Panc1 (cell line): ENCODE measurements at regions of chr1 and their contacts with region 1.

Region 1: DNA sequence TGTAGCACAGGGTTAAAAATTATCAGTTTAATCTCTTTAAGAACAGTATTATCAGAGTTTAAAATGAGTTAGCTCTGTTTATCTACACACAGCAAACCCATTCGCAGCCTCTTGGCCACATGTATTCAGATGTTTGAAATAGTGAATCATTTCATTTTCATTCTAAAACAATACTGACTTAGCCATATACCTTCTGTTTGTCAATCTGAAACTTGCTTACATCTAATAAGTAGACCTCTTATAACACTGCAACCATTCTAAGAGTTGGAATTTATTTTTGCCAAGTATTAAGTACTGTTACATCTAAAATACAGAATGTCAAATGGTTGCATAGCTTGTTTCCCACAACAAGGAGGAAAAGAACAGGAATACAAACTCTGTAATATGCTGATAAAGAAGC is 25.4 kb downstream of the ANGEL2 start:
- DNase-seq: no peak
- ATAC-seq: no peak
- H3K4me3 ChIP-seq: no peak overlapping the region
- H3K27ac ChIP-seq: no peak overlapping the region
- H3K4me1 ChIP-seq: no peaks in the 10 kb centered on the region
- H3K27me3 ChIP-seq: no peaks in the 10 kb centered on the region
- CTCF ChIP-seq: no peak

Region 2: GRCh38 chr1:212635141-212635631 is 355.1 kb before region 1 on chr1:
- CTCF ChIA-PET with region 1: no interaction called
- POLR2A ChIA-PET with region 1: no interaction called
- in situ Hi-C with region 1: no loop called
- intact Hi-C with region 1: no loop called
- DNase-seq: no peak
- ATAC-seq: no peak
- H3K4me3 ChIP-seq: no peak overlapping the region
- H3K27ac ChIP-seq: no peak overlapping the region
- H3K4me1 ChIP-seq: no peaks in the 10 kb centered on the region
- H3K27me3 ChIP-seq: 0 out of 2 replicates have a peak, but pooled peaks cover 2% of the 10 kb centered on the region
- CTCF ChIP-seq: no peak

Region 3: GRCh38 chr1:212738330-212738729 is 251.9 kb before region 1 on chr1:
- CTCF ChIA-PET with region 1: no interaction called
- POLR2A ChIA-PET with region 1: no interaction called
- in situ Hi-C with region 1: no loop called
- intact Hi-C with region 1: no loop called
- DNase-seq: no peak
- ATAC-seq: no peak
- H3K4me3 ChIP-seq: no peak overlapping the region
- H3K27ac ChIP-seq: no peak overlapping the region
- H3K4me1 ChIP-seq: no peaks in the 10 kb centered on the region
- H3K27me3 ChIP-seq: no peaks in the 10 kb centered on the region
- CTCF ChIP-seq: no peak

Region 4: GRCh38 chr1:212814537-212815334 is 175.5 kb before region 1 on chr1:
- CTCF ChIA-PET with region 1: interaction called, 4 read pairs
- POLR2A ChIA-PET with region 1: no interaction called
- in situ Hi-C with region 1: no loop called
- intact Hi-C with region 1: loop called (anchors 5 kb)
- DNase-seq: no peak
- ATAC-seq: no peak
- H3K4me3 ChIP-seq: no peak overlapping the region
- H3K27ac ChIP-seq: no peak overlapping the region
- H3K4me1 ChIP-seq: 0 out of 2 replicates have a peak, but pooled peaks cover 3% of the 10 kb centered on the region
- H3K27me3 ChIP-seq: no peaks in the 10 kb centered on the region
- CTCF ChIP-seq: no peak

Region 5: DNA sequence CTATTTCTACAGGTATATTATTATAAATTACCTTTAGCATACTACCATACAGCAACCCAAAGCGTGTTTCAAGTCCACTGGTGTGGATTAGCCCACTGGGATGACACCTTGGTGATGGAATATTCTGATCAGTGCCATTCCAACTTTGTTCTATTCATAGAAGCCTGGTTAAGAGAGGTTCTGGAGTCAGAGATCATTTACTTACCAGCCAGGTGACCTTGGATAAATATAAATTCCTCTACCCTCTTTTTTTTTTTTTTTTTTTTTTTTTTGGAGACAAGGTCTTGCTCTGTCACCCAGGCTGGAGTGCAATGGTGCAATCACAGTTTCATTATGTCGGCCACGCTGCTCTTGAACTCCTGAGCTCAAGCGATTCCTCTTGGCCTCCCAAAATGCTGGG is 142.7 kb before region 1 on chr1 and contains the start of gene SPATA45:
- CTCF ChIA-PET with region 1: interaction called, 12 read pairs
- POLR2A ChIA-PET with region 1: no interaction called
- in situ Hi-C with region 1: no loop called
- intact Hi-C with region 1: no loop called
- DNase-seq: no peak
- ATAC-seq: no peak
- H3K4me3 ChIP-seq: no peak within 1 kb of the TSS
- H3K27ac ChIP-seq: no peak within 1 kb of the TSS
- H3K4me1 ChIP-seq: no peaks in the 10 kb centered on the region
- H3K27me3 ChIP-seq: no peaks in the 10 kb centered on the region
- CTCF ChIP-seq: no peak
- total RNA-seq, gene SPATA45: not detected

Region 6: DNA sequence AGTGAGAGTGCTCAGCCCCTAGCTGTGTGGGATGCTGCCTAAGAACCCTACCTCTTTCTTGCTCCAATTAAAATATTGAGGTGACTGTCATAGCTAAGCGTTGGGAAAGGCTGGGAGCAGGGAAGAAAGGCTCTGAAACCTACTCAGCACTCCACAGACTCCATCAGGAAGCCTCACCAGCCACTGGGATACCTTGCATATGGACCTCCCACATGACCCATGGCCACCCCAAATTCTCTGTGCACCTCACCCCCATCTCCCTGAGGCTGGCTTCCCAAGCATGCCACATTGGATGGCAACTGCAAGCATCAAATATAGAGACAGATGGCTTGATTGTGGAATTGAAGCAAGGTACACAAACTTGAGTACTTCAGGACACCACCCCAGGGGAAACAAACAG is 90.4 kb before region 1 on chr1:
- CTCF ChIA-PET with region 1: no interaction called
- POLR2A ChIA-PET with region 1: no interaction called
- in situ Hi-C with region 1: no loop called
- intact Hi-C with region 1: loop called (anchors 10 kb)
- DNase-seq: no peak
- ATAC-seq: no peak
- H3K4me3 ChIP-seq: no peak overlapping the region
- H3K27ac ChIP-seq: no peak overlapping the region
- H3K4me1 ChIP-seq: no peaks in the 10 kb centered on the region
- H3K27me3 ChIP-seq: no peaks in the 10 kb centered on the region
- CTCF ChIP-seq: no peak